Activated T-helper 2 cell treated with anti-CD3 and anti-CD28 coated beads, Interferon-gamma antibody, Interleukin-2, Interleukin-4, amounts not matched to agents 10 μg/mL and 5 μg/mL and 100 μg/mL, durations not matched to agents 14 hours and 24 hours and 36 hours (primary cell): ENCODE measurements at regions of chr2 and their contacts with region 1.

Region 1: DNA sequence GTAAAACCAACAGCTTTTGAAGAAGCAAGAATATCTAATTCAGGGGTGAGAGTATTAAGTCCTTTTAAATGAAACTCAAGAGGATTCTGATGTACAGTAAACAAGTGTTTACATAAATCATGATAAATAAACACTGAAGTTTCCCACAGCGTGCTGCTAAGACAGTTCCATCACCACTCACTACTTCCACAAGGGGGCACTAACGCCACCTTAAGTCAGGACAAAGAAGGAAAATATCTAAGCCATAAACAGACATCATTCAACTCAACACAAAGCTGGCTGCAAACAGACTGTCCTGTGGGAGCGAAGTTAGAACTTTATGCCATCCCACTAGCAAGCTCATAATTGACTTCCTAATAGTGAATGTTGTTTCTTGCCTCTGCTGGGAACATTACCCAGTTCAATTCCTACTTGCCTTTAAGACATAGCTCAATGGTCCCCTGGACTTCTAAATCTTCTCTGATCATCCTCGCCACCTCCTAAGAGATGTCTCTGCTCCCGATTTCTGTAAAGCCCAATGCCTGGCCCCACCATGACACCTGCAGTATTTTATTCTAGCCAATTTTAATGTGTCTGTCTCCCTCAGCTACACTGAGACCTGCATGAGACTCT is 36.5 kb downstream of the MRPL44 start:
- DNase-seq: peak; percentile 47
- H3K4me3 Mint-ChIP-seq: no peak overlapping the region
- H3K27ac Mint-ChIP-seq: no peak overlapping the region
- H3K4me1 Mint-ChIP-seq: peaks cover 14% of the 10 kb centered on the region
- H3K27me3 Mint-ChIP-seq: no peaks in the 10 kb centered on the region

Region 2: GRCh38 chr2:223970343-223971128 is 23.2 kb before region 1 on chr2:
- intact Hi-C with region 1: loop called (anchors 2 kb)
- DNase-seq: no peak
- H3K4me3 Mint-ChIP-seq: no peak overlapping the region
- H3K27ac Mint-ChIP-seq: no peak overlapping the region
- H3K4me1 Mint-ChIP-seq: peaks cover 11% of the 10 kb centered on the region
- H3K27me3 Mint-ChIP-seq: no peaks in the 10 kb centered on the region

Region 3: GRCh38 chr2:224008702-224009261 is 15.1 kb after region 1 on chr2:
- intact Hi-C with region 1: no loop called
- DNase-seq: no peak
- H3K4me3 Mint-ChIP-seq: no peak overlapping the region
- H3K27ac Mint-ChIP-seq: no peak overlapping the region
- H3K4me1 Mint-ChIP-seq: peaks cover 13% of the 10 kb centered on the region
- H3K27me3 Mint-ChIP-seq: no peaks in the 10 kb centered on the region

Region 4: GRCh38 chr2:224039124-224039940 is 45.6 kb after region 1 on chr2 and contains the start of gene SERPINE2:
- intact Hi-C with region 1: loop called (anchors 1 kb)
- DNase-seq: peak; percentile 39
- H3K4me3 Mint-ChIP-seq: peak within 1 kb of the TSS; percentile 91
- H3K27ac Mint-ChIP-seq: peak within 1 kb of the TSS; percentile 13
- H3K4me1 Mint-ChIP-seq: peaks cover 21% of the 10 kb centered on the region
- H3K27me3 Mint-ChIP-seq: peaks cover 53% of the 10 kb centered on the region
- total RNA-seq, gene SERPINE2: 18.3 and 19.2 TPM in 2 replicates

Region 5: DNA sequence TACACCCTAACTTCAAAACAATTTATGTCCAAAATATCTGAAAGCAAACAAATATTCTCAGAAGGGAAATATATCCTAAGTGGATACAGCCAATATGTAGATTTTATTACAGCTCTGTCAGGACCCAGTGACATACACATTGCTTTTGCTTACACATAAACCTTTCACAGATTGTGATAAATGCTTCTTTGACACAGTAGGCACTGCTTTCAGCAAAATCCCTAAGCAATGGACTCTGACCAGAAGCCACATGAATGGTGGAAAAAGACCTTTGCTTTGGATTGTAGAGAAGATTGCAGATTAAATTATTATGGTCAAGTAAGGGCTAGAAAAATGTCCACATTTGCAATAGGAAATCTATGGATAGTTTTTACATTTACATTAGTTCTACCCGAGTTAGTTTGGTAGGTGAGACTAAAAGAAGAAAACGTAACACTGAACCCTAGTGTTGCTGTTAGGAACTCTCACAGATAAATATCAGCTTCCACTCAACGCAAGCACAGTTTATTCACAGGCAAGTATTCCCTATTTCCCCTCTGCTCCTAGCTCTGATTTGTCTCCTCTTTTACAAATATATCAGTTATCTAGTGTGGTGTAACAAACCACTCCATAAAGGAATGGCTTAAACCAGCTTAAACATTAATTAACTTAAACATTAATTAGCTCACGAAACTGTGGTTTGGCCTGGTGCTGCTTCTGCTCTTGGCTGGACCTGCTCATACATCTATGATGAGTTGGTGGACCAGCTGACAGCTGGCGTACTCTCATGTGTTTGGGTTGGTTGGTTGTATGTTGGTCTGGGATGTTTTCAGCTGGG is 69.0 kb after region 1 on chr2:
- intact Hi-C with region 1: loop called (anchors 1 kb)
- DNase-seq: no peak
- H3K4me3 Mint-ChIP-seq: no peak overlapping the region
- H3K27ac Mint-ChIP-seq: no peak overlapping the region
- H3K4me1 Mint-ChIP-seq: no peaks in the 10 kb centered on the region
- H3K27me3 Mint-ChIP-seq: peaks cover 29% of the 10 kb centered on the region

Region 6: DNA sequence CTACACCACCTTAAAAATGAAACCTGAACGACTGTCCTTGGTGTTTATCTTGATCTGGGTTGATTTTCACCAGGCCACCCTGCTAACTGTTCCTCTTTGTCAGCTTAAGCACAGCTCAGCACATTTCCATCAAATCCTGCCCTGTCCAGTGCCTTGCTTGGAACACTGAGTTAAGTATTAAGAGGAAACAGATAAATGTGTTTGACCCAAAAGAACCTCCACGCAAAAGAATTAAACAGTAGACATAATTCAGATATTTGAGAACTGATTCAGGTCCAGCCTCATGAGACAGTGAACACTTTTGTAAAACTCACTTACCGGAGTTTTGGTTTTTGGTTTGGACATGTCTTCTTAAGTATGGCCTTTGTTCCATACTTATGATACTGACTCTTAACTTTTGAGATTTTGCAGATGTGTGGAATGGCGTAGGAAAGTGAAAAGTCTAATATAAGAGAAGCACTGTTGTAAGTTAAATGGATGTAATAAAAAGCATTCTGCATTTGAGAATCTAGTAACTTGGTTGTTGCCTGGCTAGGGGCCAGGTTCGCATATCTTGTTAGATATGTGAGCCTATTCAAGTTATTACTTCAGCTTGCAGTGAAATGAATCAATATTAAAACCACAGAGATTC is 134.3 kb after region 1 on chr2:
- intact Hi-C with region 1: no loop called
- DNase-seq: no peak
- H3K4me3 Mint-ChIP-seq: no peak overlapping the region
- H3K27ac Mint-ChIP-seq: no peak overlapping the region
- H3K4me1 Mint-ChIP-seq: no peaks in the 10 kb centered on the region
- H3K27me3 Mint-ChIP-seq: peaks cover 20% of the 10 kb centered on the region

Region 7: GRCh38 chr2:224284134-224284946 is 290.6 kb after region 1 on chr2:
- intact Hi-C with region 1: loop called (anchors 1 kb)
- DNase-seq: no peak
- H3K4me3 Mint-ChIP-seq: no peak overlapping the region
- H3K27ac Mint-ChIP-seq: no peak overlapping the region
- H3K4me1 Mint-ChIP-seq: no peaks in the 10 kb centered on the region
- H3K27me3 Mint-ChIP-seq: peaks cover 33% of the 10 kb centered on the region

Region 8: GRCh38 chr2:224369028-224369632 is 375.4 kb after region 1 on chr2:
- intact Hi-C with region 1: loop called (anchors 5 kb)
- DNase-seq: no peak
- H3K4me3 Mint-ChIP-seq: no peak overlapping the region
- H3K27ac Mint-ChIP-seq: no peak overlapping the region
- H3K4me1 Mint-ChIP-seq: no peaks in the 10 kb centered on the region
- H3K27me3 Mint-ChIP-seq: peaks cover 9% of the 10 kb centered on the region